Activated CD8-positive, alpha-beta T cell treated with anti-CD3 and anti-CD28 coated beads for 36 hours (primary cell): ENCODE measurements at regions of chr1 and their contacts with region 1.

Region 1: DNA sequence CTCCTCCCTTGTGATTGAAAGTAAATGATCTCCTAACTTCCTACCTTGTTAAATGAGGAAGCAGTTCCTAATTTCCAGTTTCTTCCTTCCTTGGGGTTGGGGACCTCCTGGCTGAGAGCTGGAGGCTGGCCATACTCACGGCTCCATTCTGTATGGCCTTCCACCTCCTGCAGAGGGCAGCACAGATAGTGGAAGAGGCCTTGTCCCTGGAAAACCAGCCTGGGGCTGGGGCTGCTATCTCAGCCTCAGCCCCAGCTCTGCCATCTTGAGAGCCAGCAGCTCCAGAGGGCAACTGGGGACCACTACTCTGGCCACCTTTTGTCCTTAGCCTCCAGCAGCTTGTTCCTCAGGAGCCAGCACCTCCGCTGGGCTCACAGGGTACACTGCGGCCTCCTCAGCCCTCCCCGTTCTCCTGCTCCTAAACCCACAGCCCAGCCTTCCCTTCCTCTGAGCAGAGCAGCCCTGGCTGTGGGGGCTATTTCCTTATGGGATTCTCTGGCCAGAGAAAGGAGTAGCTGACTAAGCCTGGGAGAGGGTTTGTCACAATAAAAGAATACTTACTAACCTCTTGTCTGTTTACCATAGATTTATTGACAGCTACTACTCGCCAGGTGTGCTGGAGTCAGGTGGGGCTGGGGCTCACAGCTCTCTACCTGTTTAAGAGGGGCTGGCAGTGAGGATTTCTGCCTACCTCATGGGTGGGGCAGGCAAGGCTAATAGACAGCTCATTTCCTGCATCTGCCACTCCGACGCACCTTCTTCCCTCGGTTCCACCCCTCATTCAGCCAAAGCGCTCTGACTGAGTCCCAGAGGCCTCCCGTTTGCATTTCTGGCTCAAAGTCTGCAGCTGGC is 6.3 kb downstream of the TMEM234 start:
- DNase-seq: peak; percentile 69
- ATAC-seq: peak; percentile 97
- H3K4me3 Mint-ChIP-seq: no peak overlapping the region
- H3K27ac Mint-ChIP-seq: no peak overlapping the region
- H3K4me1 Mint-ChIP-seq: peaks cover 11% of the 10 kb centered on the region
- H3K27me3 Mint-ChIP-seq: no peaks in the 10 kb centered on the region
- CTCF ChIP-seq: peak; percentile 91

Region 2: DNA sequence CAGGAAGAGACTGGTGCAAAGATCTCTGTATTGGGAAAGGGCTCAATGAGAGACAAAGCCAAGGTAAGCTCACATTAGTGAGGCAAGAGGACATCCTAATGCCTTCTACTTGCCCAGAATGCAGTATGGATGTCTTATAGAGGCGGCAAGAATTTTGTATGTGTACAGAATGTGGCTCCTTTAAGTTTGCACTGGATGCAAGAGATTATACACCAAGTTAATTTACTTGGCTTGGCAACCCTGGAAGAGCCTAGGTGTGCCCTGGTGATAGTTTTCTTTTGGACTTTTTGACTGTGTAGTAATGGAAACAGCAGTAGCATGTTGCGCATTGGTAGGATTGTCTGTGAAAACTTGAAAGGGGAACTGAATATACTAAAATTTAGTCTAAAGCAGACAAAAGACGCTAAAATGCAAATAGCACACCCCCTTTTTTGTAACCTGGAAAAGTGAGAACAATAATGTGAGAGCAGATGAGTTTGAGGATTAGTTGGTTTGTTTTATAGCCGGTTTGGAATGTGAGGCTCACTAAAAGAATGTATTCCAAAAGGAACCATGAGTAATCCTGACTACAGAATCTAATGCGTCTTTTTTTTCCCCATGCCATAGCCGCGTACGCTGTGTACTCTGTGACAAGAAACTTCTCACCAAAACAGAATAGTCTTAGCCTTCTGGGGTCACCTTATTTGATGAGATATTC is 184.1 kb before region 1 on chr1:
- CTCF ChIA-PET with region 1: no interaction called
- POLR2A ChIA-PET with region 1: no interaction called
- intact Hi-C with region 1: no loop called
- DNase-seq: no peak
- ATAC-seq: no peak
- H3K4me3 Mint-ChIP-seq: no peak overlapping the region
- H3K27ac Mint-ChIP-seq: peak overlapping the region; percentile 2
- H3K4me1 Mint-ChIP-seq: peaks cover 39% of the 10 kb centered on the region
- H3K27me3 Mint-ChIP-seq: no peaks in the 10 kb centered on the region
- CTCF ChIP-seq: no peak

Region 3: GRCh38 chr1:32200226-32201010 is 15.4 kb before region 1 on chr1 and contains the start of gene CCDC28B:
- CTCF ChIA-PET with region 1: interaction called, 44 read pairs
- POLR2A ChIA-PET with region 1: interaction called, 9 read pairs
- intact Hi-C with region 1: no loop called
- DNase-seq: peak; percentile 80
- ATAC-seq: peak; percentile 48
- H3K4me3 Mint-ChIP-seq: peak within 1 kb of the TSS; percentile 80
- H3K27ac Mint-ChIP-seq: peak within 1 kb of the TSS; percentile 91
- H3K4me1 Mint-ChIP-seq: peaks cover 57% of the 10 kb centered on the region
- H3K27me3 Mint-ChIP-seq: no peaks in the 10 kb centered on the region
- CTCF ChIP-seq: no peak
- total RNA-seq, gene CCDC28B: 27.0 to 27.7 TPM

Region 4: DNA sequence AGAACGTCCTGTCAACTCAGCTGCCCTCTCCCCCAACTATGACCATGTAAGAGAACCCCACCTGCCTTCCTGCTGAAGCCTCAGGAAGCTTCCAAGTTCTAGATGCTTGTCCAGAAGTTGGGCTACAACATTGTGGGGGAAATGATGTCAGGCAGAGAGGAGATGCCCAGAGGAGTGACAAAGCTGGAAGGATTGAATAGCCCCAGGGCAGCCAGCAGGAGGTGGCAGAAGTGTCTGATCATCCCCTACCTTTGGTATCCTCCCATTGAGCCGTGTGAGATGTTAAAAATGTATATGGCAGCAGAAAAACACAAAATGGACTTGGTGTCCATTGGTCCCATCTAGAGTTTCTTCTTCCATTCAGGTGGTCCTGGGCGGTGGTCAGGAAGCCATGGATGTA is 12.9 kb after region 1 on chr1:
- CTCF ChIA-PET with region 1: interaction called, 17 read pairs
- POLR2A ChIA-PET with region 1: no interaction called
- intact Hi-C with region 1: no loop called
- DNase-seq: no peak
- ATAC-seq: no peak
- H3K4me3 Mint-ChIP-seq: no peak overlapping the region
- H3K27ac Mint-ChIP-seq: peak overlapping the region; percentile 16
- H3K4me1 Mint-ChIP-seq: peaks cover 14% of the 10 kb centered on the region
- H3K27me3 Mint-ChIP-seq: no peaks in the 10 kb centered on the region
- CTCF ChIP-seq: no peak

Region 5: DNA sequence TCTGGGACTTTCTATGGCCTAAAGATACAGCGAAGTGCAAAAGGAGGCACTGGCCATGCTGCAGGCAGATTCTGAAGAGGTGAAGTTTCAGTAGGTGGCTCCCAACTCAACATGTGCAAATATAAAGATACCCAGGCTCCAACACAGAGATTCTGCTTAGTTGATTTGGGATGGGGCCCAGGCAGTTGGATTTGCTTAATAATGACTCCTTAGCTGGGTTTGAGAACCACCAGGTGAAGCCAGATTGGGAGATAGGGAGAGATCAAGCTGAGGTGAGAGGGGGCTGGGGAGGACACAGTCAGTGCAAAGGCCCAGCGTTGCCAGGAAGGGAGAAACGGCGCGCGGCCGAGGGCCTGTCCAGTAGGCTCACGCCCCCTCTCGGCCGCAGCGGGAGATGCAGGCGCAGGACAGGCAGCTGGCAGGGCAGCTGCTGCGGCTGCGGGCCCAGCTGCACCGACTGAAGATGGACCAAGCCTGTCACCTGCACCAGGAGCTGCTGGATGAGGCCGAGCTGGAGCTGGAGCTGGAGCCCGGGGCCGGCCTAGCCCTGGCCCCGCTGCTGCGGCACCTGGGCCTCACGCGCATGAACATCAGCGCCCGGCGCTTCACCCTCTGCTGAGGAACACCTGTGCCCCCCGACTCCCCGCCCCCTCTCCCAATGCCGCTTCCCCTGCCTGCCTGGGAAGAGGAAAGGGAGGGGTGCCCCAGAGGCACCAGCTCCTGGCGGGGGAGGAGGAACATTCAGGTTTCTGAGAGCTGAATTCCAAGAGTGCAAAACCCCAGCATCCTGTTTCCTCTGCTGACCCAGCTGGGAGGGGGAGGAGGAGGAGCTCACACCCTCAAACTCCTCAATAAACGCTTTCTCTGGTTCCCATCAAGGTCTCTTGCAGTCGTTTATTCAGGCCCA is 32.4 kb after region 1 on chr1:
- CTCF ChIA-PET with region 1: interaction called, 34 read pairs
- POLR2A ChIA-PET with region 1: interaction called, 9 read pairs
- intact Hi-C with region 1: no loop called
- DNase-seq: peak; percentile 92
- ATAC-seq: peak; percentile 21
- H3K4me3 Mint-ChIP-seq: peak overlapping the region; percentile 50
- H3K27ac Mint-ChIP-seq: peak overlapping the region; percentile 99
- H3K4me1 Mint-ChIP-seq: peaks cover 41% of the 10 kb centered on the region
- H3K27me3 Mint-ChIP-seq: no peaks in the 10 kb centered on the region
- CTCF ChIP-seq: peak; percentile 96

Region 6: DNA sequence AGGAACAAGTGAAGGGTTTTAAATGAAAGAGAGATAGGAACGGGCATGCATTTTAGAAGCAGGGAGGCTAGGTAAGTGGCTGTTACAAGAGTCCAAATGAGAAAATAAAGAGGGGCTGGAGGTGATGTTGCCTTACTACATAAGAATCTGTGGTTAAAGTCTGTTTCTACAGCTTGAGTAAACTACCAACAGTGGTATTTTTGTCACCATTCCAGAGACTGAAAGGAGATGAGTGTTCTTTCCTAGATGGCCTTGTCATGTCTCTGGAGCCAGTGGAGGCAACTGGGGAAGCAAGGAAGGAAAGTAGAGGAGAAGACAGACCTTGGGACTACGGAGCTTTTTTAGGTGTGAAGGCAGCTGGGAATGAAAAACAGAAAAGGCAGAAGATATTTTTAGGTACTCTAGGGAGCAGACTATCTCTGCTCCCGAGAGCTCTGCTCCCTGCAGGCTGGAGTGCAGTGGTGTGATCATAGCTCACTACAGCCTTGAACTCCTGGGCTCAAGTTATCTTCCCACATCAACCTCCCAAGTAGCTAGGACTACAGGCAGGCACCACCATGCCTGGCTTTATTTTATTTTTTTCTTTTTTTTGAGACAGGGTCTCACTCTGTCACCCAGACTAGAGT is 88.3 kb after region 1 on chr1:
- CTCF ChIA-PET with region 1: interaction called, 11 read pairs
- POLR2A ChIA-PET with region 1: no interaction called
- intact Hi-C with region 1: no loop called
- DNase-seq: no peak
- ATAC-seq: no peak
- H3K4me3 Mint-ChIP-seq: no peak overlapping the region
- H3K27ac Mint-ChIP-seq: peak overlapping the region; percentile 66
- H3K4me1 Mint-ChIP-seq: peaks cover 55% of the 10 kb centered on the region
- H3K27me3 Mint-ChIP-seq: no peaks in the 10 kb centered on the region
- CTCF ChIP-seq: no peak

Region 7: GRCh38 chr1:32335790-32336590 is 120.1 kb after region 1 on chr1 and contains the start of gene MARCKSL1:
- CTCF ChIA-PET with region 1: interaction called, 11 read pairs
- POLR2A ChIA-PET with region 1: no interaction called
- intact Hi-C with region 1: no loop called
- DNase-seq: peak; percentile 85
- ATAC-seq: peak; percentile 55
- H3K4me3 Mint-ChIP-seq: peak within 1 kb of the TSS; percentile 81
- H3K27ac Mint-ChIP-seq: peak within 1 kb of the TSS; percentile 72
- H3K4me1 Mint-ChIP-seq: peaks cover 49% of the 10 kb centered on the region
- H3K27me3 Mint-ChIP-seq: no peaks in the 10 kb centered on the region
- CTCF ChIP-seq: no peak
- total RNA-seq, gene MARCKSL1: 31.2 to 33.5 TPM

Region 8: DNA sequence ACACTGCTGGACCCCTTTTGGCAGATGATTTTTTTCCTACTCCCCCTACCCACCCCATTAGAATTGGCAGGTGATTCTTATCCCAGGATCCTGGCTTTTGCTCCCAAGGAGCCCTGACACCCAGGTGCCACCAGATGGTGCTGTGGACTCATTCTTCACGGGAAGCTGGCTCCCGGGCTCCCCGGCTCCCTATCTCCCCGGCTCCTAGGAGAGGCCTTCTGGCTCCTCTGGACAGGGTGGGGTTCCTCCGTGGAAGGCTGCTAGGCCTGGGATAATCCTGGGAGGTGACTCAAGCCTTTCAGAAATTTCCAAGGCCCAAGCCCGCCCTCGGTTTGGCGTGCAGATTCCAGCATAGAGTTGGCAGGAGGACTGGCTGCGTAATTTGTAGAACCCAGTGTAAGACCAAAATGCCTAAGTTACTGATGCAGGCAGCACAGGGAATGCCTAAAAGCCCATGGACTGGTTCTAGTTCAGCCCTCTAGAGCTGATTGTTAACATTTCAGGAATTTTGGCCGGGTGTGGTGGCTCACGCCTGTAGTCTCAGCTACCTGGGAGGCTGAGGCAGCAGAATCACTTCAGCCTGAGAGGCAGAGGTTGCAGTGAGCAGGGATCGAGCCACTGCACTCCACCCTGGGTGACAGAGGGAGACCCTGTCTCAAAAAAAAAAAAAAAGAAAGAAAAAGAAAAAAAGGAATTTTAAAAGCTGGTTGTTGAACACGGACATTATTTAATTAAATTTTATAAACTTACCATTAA is 185.2 kb after region 1 on chr1:
- CTCF ChIA-PET with region 1: interaction called, 21 read pairs
- POLR2A ChIA-PET with region 1: no interaction called
- intact Hi-C with region 1: no loop called
- DNase-seq: peak; percentile 63
- ATAC-seq: peak; percentile 86
- H3K4me3 Mint-ChIP-seq: no peak overlapping the region
- H3K27ac Mint-ChIP-seq: no peak overlapping the region
- H3K4me1 Mint-ChIP-seq: no peaks in the 10 kb centered on the region
- H3K27me3 Mint-ChIP-seq: no peaks in the 10 kb centered on the region
- CTCF ChIP-seq: peak; percentile 90

Region 9: DNA sequence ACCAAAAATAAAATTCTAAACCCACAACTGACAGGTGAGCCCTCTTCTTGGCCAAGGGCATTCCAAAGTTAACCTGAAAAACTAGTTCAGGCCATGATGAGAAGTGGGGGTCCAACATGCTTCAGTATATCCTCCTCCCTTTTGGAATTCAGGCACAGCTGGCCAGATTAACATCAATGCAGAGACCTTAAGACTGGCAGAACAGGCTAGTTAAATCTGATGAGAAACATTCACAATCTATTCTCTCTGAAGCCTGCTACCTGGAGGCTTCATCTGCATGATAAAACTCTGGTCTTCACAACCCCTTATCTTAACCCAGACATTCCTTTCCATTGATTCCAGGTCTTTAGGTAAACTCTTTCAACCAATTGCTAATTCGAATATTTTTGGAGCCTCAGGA is 222.3 kb after region 1 on chr1:
- CTCF ChIA-PET with region 1: no interaction called
- POLR2A ChIA-PET with region 1: no interaction called
- intact Hi-C with region 1: no loop called
- DNase-seq: no peak
- ATAC-seq: no peak
- H3K4me3 Mint-ChIP-seq: no peak overlapping the region
- H3K27ac Mint-ChIP-seq: no peak overlapping the region
- H3K4me1 Mint-ChIP-seq: no peaks in the 10 kb centered on the region
- H3K27me3 Mint-ChIP-seq: peaks cover 22% of the 10 kb centered on the region
- CTCF ChIP-seq: no peak